ENCODE measurements at regions of chr11 and their contacts with region 1.

Region 1: GRCh38 chr11:62905927-62906531 is 15.1 kb downstream of the CHRM1 start:
- DNase-seq: peak; percentile 71 to 96
- H3K4me3 ChIP-seq: no peak overlapping the region
- H3K27ac ChIP-seq: no peak overlapping the region
- H3K4me1 ChIP-seq: peaks cover 9 to 25% (median 16%) of the 10 kb centered on the region in 4 experiments
- H3K27me3 ChIP-seq: peaks cover 0 to 3% (median 1%) of the 10 kb centered on the region in 4 experiments; a peak in 2 of 7 replicates
- CTCF ChIP-seq: peak; percentile 99 to 100 (median 99)
- EP300 ChIP-seq: no peak
- POLR2A ChIP-seq: no peak
- RAD21 ChIP-seq: peak; percentile 100

Region 2: GRCh38 chr11:62816557-62816956 is 89.5 kb before region 1 on chr11:
- CTCF ChIA-PET with region 1: no interaction called
- POLR2A ChIA-PET with region 1: no interaction called
- DNase-seq: no peak
- H3K4me3 ChIP-seq: no peak overlapping the region
- H3K27ac ChIP-seq: no peak overlapping the region
- H3K4me1 ChIP-seq: no peaks in the 10 kb centered on the region
- H3K27me3 ChIP-seq: no peaks in the 10 kb centered on the region
- CTCF ChIP-seq: no peak
- EP300 ChIP-seq: no peak
- POLR2A ChIP-seq: no peak
- RAD21 ChIP-seq: no peak

Region 3: GRCh38 chr11:62880803-62881578 is 25.0 kb before region 1 on chr11 and contains the start of gene SLC3A2:
- CTCF ChIA-PET with region 1: interaction called, 21 read pairs
- POLR2A ChIA-PET with region 1: interaction called, 1,185 read pairs
- DNase-seq: peak; percentile 56 to 88
- H3K4me3 ChIP-seq: peak within 1 kb of the TSS; percentile 67 to 97 (median 88)
- H3K27ac ChIP-seq: peak within 1 kb of the TSS; percentile 98
- H3K4me1 ChIP-seq: peaks cover 0 to 30% (median 12%) of the 10 kb centered on the region in 4 experiments; a peak in 5 of 7 replicates
- H3K27me3 ChIP-seq: no peaks in the 10 kb centered on the region
- CTCF ChIP-seq: peak; percentile 60 to 82 (median 71)
- EP300 ChIP-seq: no peak
- POLR2A ChIP-seq: peak; percentile 97 to 99
- RAD21 ChIP-seq: peak; percentile 39 to 55
- total RNA-seq, gene SLC3A2: 393 and 410 TPM in 2 replicates

Region 4: GRCh38 chr11:62948765-62949320 is 42.8 kb after region 1 on chr11:
- CTCF ChIA-PET with region 1: interaction called, 11 read pairs
- POLR2A ChIA-PET with region 1: interaction called, 3 read pairs
- DNase-seq: no peak
- H3K4me3 ChIP-seq: no peak overlapping the region
- H3K27ac ChIP-seq: no peak overlapping the region
- H3K4me1 ChIP-seq: no peaks in the 10 kb centered on the region
- H3K27me3 ChIP-seq: no peaks in the 10 kb centered on the region
- CTCF ChIP-seq: no peak
- EP300 ChIP-seq: no peak
- POLR2A ChIP-seq: no peak
- RAD21 ChIP-seq: no peak

Region 5: DNA sequence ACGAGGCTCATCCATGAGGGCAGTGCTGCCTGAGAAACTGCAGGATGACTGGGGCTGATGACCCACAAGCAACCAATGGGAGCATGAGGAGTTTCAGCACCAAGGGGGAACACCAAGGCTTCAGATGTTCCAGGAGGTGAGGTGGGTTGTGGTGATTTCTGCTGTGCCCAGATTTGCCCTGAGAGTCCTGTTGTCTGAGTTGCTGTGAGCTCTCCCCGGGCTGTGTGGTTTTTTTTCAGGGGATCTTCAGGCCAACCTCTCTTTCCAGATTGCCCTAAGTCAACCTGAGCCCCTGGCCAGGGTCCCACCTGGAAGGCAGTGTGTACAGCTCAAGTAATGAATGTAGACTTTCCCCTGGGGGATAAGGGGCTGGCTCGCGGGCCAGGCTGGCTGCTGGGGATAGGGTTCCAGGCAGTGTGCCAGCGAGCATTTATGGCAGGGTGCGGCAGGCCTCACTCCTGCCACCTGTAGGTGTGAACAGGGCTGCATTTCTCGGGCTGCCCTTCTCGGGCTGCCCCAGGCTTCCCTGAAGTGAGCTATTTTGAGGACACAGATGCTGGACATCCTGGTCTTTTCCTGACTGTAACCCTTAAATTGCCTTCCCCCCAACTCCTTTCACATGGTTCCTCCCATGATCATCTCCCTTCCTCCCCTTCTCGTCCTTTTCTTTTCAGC is 69.0 kb after region 1 on chr11:
- CTCF ChIA-PET with region 1: interaction called, 163 read pairs
- POLR2A ChIA-PET with region 1: interaction called, 5 read pairs
- DNase-seq: peak; percentile 25 to 67
- H3K4me3 ChIP-seq: no peak overlapping the region
- H3K27ac ChIP-seq: no peak overlapping the region
- H3K4me1 ChIP-seq: peaks cover 0 to 4% (median 0%) of the 10 kb centered on the region in 4 experiments; a peak in 2 of 7 replicates
- H3K27me3 ChIP-seq: peaks cover 0 to 4% (median 1%) of the 10 kb centered on the region in 4 experiments; a peak in 3 of 7 replicates
- CTCF ChIP-seq: peak; percentile 71 to 90 (median 87)
- EP300 ChIP-seq: no peak
- POLR2A ChIP-seq: no peak
- RAD21 ChIP-seq: peak; percentile 57 to 67

Region 6: DNA sequence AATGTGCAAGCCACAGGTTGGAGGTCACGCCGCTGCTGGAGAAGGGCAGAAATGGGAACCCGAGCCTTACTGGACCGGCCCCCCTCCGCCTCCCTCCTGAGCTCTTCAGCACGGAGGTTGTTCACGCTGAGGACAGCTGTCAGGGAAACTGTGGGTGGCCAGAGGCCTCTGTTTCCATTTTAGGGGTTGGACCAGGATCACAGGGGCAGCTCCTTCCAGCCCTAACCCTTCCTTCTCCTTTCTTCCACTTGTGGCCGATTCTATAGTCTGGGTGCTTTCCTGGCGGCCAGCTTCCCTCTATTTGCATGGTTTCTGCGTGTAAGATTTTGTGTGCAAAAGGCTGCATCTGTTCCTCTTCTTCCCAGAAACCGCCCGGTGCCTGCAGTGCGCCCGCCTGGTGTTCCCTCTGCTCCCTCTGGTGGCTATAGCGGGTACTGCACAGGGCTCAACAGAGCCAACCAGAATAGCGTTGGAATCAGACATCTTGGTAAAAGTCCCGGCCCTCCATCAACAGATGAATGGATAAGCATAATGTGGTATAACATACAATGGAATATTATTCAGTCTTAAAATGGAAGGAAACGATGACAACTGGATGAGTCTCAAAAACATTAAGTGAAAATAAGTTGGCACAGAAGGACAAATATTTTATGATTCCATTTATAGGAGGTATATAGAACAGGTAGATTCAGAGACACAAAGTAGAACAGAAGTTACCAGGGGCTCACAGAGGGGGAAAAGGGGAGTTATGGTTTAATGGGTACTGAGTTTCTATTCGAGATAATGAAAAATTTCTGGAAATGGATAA is 118.0 kb after region 1 on chr11:
- CTCF ChIA-PET with region 1: interaction called, 435 read pairs
- POLR2A ChIA-PET with region 1: interaction called, 6 read pairs
- DNase-seq: peak; percentile 29 to 97
- H3K4me3 ChIP-seq: no peak overlapping the region
- H3K27ac ChIP-seq: no peak overlapping the region
- H3K4me1 ChIP-seq: peaks cover 0 to 7% (median 4%) of the 10 kb centered on the region in 4 experiments; a peak in 5 of 7 replicates
- H3K27me3 ChIP-seq: peaks cover 0 to 4% (median 2%) of the 10 kb centered on the region in 4 experiments; a peak in 3 of 7 replicates
- CTCF ChIP-seq: peak; percentile 95 to 98 (median 96)
- EP300 ChIP-seq: no peak
- POLR2A ChIP-seq: no peak
- RAD21 ChIP-seq: peak; percentile 84 to 87

Region 7: DNA sequence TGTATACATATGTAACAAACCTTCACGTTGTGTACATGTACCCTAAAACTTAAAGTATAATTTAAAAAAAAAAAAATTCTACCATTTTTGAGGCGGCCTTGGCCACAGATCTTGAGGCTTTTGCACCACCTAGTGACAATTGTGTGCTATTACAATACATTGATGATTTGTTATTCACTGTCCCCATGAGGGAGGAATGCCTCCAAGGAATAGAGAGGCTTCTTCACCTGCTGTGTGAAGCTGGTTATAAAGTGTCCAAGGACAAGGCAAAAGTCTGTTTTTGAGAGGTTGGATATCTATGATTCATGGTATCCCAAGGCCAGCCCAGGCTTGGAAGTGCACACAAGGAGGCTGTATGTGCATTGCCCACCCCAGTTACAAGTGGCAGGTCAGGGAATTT is 306.7 kb after region 1 on chr11:
- CTCF ChIA-PET with region 1: interaction called, 22 read pairs
- POLR2A ChIA-PET with region 1: no interaction called
- DNase-seq: no peak
- H3K4me3 ChIP-seq: no peak overlapping the region
- H3K27ac ChIP-seq: no peak overlapping the region
- H3K4me1 ChIP-seq: no peaks in the 10 kb centered on the region
- H3K27me3 ChIP-seq: no peaks in the 10 kb centered on the region
- CTCF ChIP-seq: peak in 2 of 3 experiments; percentile 41 to 56; a peak in 3 of 4 replicates
- EP300 ChIP-seq: no peak
- POLR2A ChIP-seq: no peak
- RAD21 ChIP-seq: peak; percentile 74 to 76